AG04450 (cell line): ENCODE measurements at regions of chr3 and their contacts with region 1.

Region 1: GRCh38 chr3:185362850-185363661 is at the start of gene MAP3K13:
- DNase-seq: peak; percentile 78
- H3K4me3 ChIP-seq: peak within 1 kb of the TSS; percentile 61
- H3K27ac ChIP-seq: no peak within 1 kb of the TSS
- H3K27me3 ChIP-seq: peaks cover 5% of the 10 kb centered on the region
- CTCF ChIP-seq: no peak
- polyA plus RNA-seq, gene MAP3K13: 16.8 and 20.9 TPM in 2 replicates

Region 2: GRCh38 chr3:185555101-185555501 is 192.0 kb after region 1 on chr3:
- CTCF ChIA-PET with region 1: interaction called, 11 read pairs
- POLR2A ChIA-PET with region 1: no interaction called
- DNase-seq: no peak
- H3K4me3 ChIP-seq: no peak overlapping the region
- H3K27ac ChIP-seq: no peak overlapping the region
- H3K27me3 ChIP-seq: peaks cover 4% of the 10 kb centered on the region
- CTCF ChIP-seq: no peak